CD4-positive, alpha-beta T cell (primary cell): ENCODE measurements at regions of chr11 and their contacts with region 1.

Region 1: GRCh38 chr11:125111343-125112207 is at the start of gene TMEM218:
- DNase-seq: peak; percentile 89 to 99 (median 92)
- ATAC-seq: peak; percentile 94
- H3K4me3 ChIP-seq: peak within 1 kb of the TSS; percentile 90
- H3K4me3 Mint-ChIP-seq: peak within 1 kb of the TSS; percentile 97
- H3K27ac ChIP-seq: peak within 1 kb of the TSS; percentile 29 to 77
- H3K27ac Mint-ChIP-seq: peak within 1 kb of the TSS; percentile 84
- H3K4me1 ChIP-seq: peaks cover 16% of the 10 kb centered on the region
- H3K4me1 Mint-ChIP-seq: peaks cover 26% of the 10 kb centered on the region
- H3K27me3 ChIP-seq: no peaks in the 10 kb centered on the region
- H3K27me3 Mint-ChIP-seq: no peaks in the 10 kb centered on the region
- CTCF ChIP-seq: no peak
- total RNA-seq, gene TMEM218: 3.9 to 4.4 TPM

Region 2: DNA sequence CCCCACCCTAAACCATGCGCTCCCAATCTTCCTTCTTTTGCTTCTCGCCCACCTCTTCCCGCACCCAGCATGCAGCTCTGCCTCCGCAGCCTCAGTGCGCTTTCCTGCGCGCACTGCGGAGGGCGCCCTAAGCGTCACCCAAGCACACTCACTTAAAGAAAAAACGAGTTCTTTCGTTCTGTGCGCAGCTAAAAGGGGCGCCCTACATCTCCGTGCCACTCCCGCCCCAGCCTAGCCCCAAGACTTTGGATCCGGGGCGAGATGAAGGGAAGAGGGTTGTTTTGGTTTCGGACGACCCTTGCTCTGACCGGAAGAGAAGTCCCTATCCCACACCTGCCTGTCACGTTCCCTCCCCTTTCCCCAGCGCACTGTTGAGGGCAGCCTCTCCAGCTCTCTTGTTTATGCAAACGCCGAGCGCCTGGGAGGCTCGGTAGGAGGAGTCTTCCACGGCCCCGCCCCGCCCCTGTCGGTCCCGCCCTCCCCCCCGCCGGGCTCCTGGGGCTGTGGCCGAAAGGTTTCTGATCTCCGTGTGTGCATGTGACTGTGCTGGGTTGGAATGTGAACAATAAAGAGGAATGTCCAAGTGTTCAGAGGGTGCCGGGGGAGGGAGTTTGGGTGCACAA is 364.8 kb before region 1 on chr11:
- CTCF ChIA-PET with region 1: no interaction called
- POLR2A ChIA-PET with region 1: interaction called, 4 read pairs
- intact Hi-C with region 1: loop called in 1 of 2 experiments (anchors 5 kb)
- DNase-seq: peak; percentile 71 to 90 (median 76)
- ATAC-seq: peak; percentile 90
- H3K4me3 ChIP-seq: peak overlapping the region; percentile 95
- H3K4me3 Mint-ChIP-seq: peak overlapping the region; percentile 94
- H3K27ac ChIP-seq: peak overlapping the region; percentile 72 to 75
- H3K27ac Mint-ChIP-seq: peak overlapping the region; percentile 82
- H3K4me1 ChIP-seq: peaks cover 32% of the 10 kb centered on the region
- H3K4me1 Mint-ChIP-seq: peaks cover 5% of the 10 kb centered on the region
- H3K27me3 ChIP-seq: peaks cover 0 to 1% of the 10 kb centered on the region in 2 experiments
- H3K27me3 Mint-ChIP-seq: no peaks in the 10 kb centered on the region
- CTCF ChIP-seq: peak; percentile 67

Region 3: DNA sequence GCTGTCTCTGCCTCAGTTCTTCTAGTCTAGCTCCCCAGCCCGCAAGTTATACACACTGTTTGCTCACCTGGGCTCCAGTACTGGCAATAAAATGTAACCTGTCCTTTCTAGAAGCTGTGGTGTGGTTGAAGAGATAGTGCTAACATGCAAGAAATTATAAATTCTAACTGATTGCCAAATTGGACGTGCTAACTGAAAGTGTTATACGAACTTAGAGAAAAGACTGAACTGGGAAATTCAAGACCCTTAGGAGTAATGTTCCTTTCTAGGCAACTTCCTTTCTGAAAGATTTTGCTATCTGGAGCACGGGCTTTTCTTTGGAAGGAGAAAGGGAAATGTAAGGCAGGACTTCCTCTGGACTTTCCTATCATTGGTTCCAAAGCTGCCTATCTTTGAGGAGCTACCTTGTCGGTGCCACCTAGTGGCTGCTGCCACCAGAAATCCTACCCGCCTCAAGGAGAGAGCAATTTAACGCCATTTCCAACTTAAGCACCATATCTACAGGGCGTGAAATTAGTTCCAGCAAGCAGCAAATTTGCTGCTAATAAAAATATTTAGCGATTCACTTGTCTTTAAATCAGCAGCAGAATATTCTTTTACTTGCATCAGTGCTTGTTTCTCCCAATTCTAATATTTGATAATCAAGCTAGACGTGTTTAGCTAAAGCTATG is 12.5 kb after region 1 on chr11:
- CTCF ChIA-PET with region 1: interaction called, 6 read pairs
- POLR2A ChIA-PET with region 1: interaction called, 18 read pairs
- intact Hi-C with region 1: no loop called
- DNase-seq: peak in 8 of 14 experiments; percentile 22 to 63 (median 36)
- ATAC-seq: peak; percentile 51
- H3K4me3 ChIP-seq: no peak overlapping the region
- H3K4me3 Mint-ChIP-seq: no peak overlapping the region
- H3K27ac ChIP-seq: no peak overlapping the region
- H3K27ac Mint-ChIP-seq: no peak overlapping the region
- H3K4me1 ChIP-seq: no peaks in the 10 kb centered on the region
- H3K4me1 Mint-ChIP-seq: no peaks in the 10 kb centered on the region
- H3K27me3 ChIP-seq: peaks cover 8 to 10% of the 10 kb centered on the region in 2 experiments
- H3K27me3 Mint-ChIP-seq: peaks cover 58% of the 10 kb centered on the region
- CTCF ChIP-seq: peak; percentile 61

Region 4: DNA sequence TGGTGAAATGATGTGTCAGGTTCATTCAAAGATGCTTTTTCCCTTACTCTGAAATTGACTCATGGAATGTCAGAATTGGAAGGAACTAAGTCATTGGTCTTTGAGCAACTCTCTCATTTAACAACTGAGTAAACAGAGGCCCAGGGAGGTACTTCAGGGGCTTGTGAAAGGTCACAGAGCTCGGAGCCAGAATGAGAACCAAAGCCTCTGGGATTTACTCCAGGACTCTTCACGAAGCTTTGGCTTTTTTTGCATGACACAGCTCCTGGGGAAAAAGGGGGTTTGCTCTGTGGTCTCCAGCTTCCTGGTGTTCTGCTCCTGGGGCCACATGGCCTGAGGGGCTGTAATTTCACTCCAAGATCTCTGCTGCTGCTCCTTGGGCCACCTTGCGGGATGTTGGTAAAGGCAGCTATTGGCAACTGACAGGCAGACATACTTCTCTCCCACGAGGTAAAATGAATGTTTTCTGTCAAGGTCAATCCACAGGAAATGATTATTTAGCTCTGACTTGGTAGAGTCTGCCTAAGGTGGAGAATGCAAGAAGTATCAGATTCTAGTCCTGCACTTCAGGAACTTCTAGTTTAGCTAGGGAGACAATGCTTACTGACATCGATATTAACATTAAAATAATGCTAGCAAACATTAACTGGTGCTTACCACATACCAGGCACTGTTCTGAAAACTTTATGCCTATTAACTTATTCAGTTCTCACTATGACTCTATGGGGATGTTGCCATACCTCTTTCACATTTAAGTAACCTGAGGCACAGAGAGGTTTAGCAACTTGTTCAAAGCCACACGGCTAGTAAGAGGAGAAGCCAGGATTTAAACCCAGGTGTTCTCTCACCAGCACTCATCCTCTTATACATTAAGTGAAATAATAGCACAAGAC is 69.1 kb after region 1 on chr11:
- CTCF ChIA-PET with region 1: no interaction called
- POLR2A ChIA-PET with region 1: no interaction called
- intact Hi-C with region 1: no loop called
- DNase-seq: no peak
- ATAC-seq: no peak
- H3K4me3 ChIP-seq: no peak overlapping the region
- H3K4me3 Mint-ChIP-seq: no peak overlapping the region
- H3K27ac ChIP-seq: no peak overlapping the region
- H3K27ac Mint-ChIP-seq: no peak overlapping the region
- H3K4me1 ChIP-seq: no peaks in the 10 kb centered on the region
- H3K4me1 Mint-ChIP-seq: no peaks in the 10 kb centered on the region
- H3K27me3 ChIP-seq: peaks cover 16 to 22% of the 10 kb centered on the region in 2 experiments
- H3K27me3 Mint-ChIP-seq: peaks cover 80% of the 10 kb centered on the region
- CTCF ChIP-seq: no peak

Region 5: DNA sequence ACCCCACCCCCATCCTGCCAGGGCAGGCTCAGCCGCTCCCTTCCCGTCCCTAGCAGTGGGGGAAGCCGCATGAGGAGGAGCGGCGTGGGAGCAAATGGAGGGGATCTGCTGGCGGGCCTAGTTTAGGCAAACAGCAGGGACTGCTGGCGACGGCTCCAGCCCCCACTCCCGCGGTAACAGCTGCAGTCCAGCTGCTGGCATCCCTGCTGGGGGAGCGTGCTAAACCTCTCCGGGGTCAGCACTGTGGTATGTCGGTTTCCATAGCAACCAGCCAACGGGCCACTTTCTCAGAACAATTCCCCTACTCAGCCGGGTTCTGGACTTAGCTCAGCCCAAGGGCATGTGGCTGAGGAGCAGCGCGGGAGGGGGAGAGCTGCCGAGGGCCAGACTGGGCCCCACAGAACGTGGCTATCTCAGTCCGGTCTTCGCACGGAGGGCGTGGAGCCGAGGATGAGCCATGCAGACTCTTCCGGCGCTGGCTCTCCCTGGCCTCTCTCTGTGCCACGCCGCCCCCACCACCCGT is 151.8 kb after region 1 on chr11:
- CTCF ChIA-PET with region 1: no interaction called
- POLR2A ChIA-PET with region 1: no interaction called
- intact Hi-C with region 1: no loop called
- DNase-seq: no peak
- ATAC-seq: no peak
- H3K4me3 ChIP-seq: no peak overlapping the region
- H3K4me3 Mint-ChIP-seq: no peak overlapping the region
- H3K27ac ChIP-seq: no peak overlapping the region
- H3K27ac Mint-ChIP-seq: no peak overlapping the region
- H3K4me1 ChIP-seq: no peaks in the 10 kb centered on the region
- H3K4me1 Mint-ChIP-seq: no peaks in the 10 kb centered on the region
- H3K27me3 ChIP-seq: peaks cover 19 to 24% of the 10 kb centered on the region in 2 experiments
- H3K27me3 Mint-ChIP-seq: peaks cover 63% of the 10 kb centered on the region
- CTCF ChIP-seq: no peak

Region 6: GRCh38 chr11:125592305-125593112 is 480.9 kb after region 1 on chr11 and contains the start of gene STT3A:
- CTCF ChIA-PET with region 1: no interaction called
- POLR2A ChIA-PET with region 1: interaction called, 5 read pairs
- intact Hi-C with region 1: loop called in 1 of 2 experiments (anchors 5 kb)
- DNase-seq: peak; percentile 94 to 100 (median 97)
- ATAC-seq: peak; percentile 91
- H3K4me3 ChIP-seq: peak within 1 kb of the TSS; percentile 94
- H3K4me3 Mint-ChIP-seq: peak within 1 kb of the TSS; percentile 94
- H3K27ac ChIP-seq: peak within 1 kb of the TSS; percentile 94 to 98
- H3K27ac Mint-ChIP-seq: peak within 1 kb of the TSS; percentile 96
- H3K4me1 ChIP-seq: peaks cover 32% of the 10 kb centered on the region
- H3K4me1 Mint-ChIP-seq: peaks cover 46% of the 10 kb centered on the region
- H3K27me3 ChIP-seq: no peaks in the 10 kb centered on the region
- H3K27me3 Mint-ChIP-seq: no peaks in the 10 kb centered on the region
- CTCF ChIP-seq: no peak
- total RNA-seq, gene STT3A: 35.1 to 38.6 TPM